Activated T-helper 1 cell treated with anti-CD3 and anti-CD28 coated beads, Interleukin-12 subunit alpha, Interleukin-12 subunit beta, Interleukin-2, Interleukin-4 antibody, amounts not matched to agents 30 ng/mL and 10 ng/mL and 1 ng/mL, durations not matched to agents 14 hours and 24 hours and 36 hours (primary cell): ENCODE measurements at regions of chr11 and their contacts with region 1.

Region 1: DNA sequence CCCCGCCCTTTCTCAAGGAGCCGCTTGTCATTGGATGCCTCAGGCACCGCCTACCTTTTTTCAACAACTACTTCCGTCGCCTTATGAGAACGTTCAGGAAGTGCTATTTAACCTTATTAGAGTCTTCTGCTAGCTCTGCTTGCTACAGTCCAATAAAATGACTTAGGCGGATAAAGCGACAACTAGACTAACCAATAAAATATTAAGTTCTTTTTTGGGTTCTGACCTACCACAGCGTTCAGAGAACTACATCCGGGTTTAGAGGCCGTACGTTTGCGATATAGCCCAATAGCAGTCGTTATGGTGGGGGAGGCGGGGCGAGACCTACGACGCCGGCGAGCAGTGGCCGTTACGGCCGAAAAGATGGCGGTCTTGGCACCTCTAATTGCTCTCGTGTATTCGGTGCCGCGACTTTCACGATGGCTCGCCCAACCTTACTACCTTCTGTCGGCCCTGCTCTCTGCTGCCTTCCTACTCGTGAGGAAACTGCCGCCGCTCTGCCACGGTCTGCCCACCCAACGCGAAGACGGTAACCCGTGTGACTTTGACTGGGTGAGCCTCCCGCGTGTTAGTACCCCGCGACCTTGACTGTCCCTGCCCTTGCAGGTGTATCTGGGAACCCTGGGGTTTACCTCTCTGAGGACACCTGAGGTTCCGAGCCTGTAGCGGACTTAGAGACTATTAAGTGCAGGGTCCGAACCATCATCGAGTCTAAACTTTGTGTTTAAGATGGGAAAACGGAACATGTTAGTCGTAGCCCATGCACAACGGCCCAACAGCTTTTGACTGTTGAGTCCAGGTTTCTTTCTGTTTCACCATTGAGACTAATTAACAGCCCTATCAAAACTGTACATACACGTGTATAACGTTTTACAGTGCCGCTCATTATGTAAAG is at the start of gene TMX2:
- DNase-seq: peak; percentile 88
- H3K4me3 Mint-ChIP-seq: peak within 1 kb of the TSS; percentile 97
- H3K27ac Mint-ChIP-seq: peak within 1 kb of the TSS; percentile 94
- H3K4me1 Mint-ChIP-seq: peaks cover 53% of the 10 kb centered on the region
- H3K27me3 Mint-ChIP-seq: no peaks in the 10 kb centered on the region
- total RNA-seq, gene TMX2: 95.9 and 96.8 TPM in 2 replicates

Region 2: DNA sequence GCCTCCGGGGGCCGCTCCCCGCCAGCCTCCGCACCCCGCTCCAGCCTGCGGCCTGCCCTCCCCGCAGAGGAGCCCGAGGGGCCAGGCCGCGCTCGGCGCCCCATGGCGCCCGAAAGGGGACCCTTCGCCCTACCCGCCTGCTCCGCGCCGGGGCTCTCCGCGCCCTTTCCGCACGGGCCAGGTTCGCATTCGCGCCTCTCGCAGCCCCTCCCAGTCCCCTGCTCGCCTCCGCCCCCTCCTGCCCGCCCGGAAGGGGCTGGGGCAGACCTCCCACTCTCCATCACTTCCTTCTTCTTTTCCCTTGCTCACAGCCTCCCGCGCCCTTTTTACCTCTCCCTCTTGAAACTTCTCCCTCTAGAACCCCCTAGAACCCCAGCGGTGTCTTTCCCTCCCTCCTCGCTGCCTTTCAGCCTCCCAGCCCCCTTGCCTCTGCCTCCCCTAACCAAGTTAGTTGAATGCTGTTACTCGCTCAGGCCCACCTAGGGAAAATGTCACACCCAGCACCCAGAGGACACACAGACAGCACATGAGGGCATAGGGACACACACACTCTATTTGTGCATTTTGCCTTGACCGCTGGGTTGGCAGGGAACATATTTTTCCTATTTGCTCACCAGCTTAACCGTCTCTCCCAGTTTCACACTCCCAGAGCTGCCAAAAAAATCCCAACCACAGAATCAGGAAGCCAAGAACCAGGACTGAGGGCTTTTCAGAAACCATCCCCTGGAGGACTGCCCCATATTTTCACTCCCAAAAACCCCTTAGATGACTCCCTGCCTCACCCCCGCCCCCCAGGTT is 285.4 kb before region 1 on chr11 and contains the start of gene SLC43A3:
- intact Hi-C with region 1: loop called (anchors 1 kb)
- DNase-seq: peak; percentile 60
- H3K4me3 Mint-ChIP-seq: peak within 1 kb of the TSS; percentile 90
- H3K27ac Mint-ChIP-seq: peak within 1 kb of the TSS; percentile 80
- H3K4me1 Mint-ChIP-seq: peaks cover 56% of the 10 kb centered on the region
- H3K27me3 Mint-ChIP-seq: peaks cover 3% of the 10 kb centered on the region
- total RNA-seq, gene SLC43A3: 181 and 184 TPM in 2 replicates

Region 3: GRCh38 chr11:57657194-57658022 is 55.1 kb before region 1 on chr11 and contains the start of gene CLP1:
- intact Hi-C with region 1: loop called (anchors 1 kb)
- DNase-seq: peak; percentile 99
- H3K4me3 Mint-ChIP-seq: peak within 1 kb of the TSS; percentile 96
- H3K27ac Mint-ChIP-seq: peak within 1 kb of the TSS; percentile 95
- H3K4me1 Mint-ChIP-seq: peaks cover 18% of the 10 kb centered on the region
- H3K27me3 Mint-ChIP-seq: no peaks in the 10 kb centered on the region
- total RNA-seq, gene CLP1: 17.8 and 19.1 TPM in 2 replicates

Region 4: GRCh38 chr11:57727185-57727584 is 14.7 kb after region 1 on chr11:
- intact Hi-C with region 1: no loop called
- DNase-seq: no peak
- H3K4me3 Mint-ChIP-seq: no peak overlapping the region
- H3K27ac Mint-ChIP-seq: peak overlapping the region; percentile 16
- H3K4me1 Mint-ChIP-seq: peaks cover 13% of the 10 kb centered on the region
- H3K27me3 Mint-ChIP-seq: no peaks in the 10 kb centered on the region

Region 5: GRCh38 chr11:57792060-57792541 is 79.6 kb after region 1 on chr11:
- intact Hi-C with region 1: loop called (anchors 1 kb)
- DNase-seq: peak; percentile 84
- H3K4me3 Mint-ChIP-seq: peak overlapping the region; percentile 53
- H3K27ac Mint-ChIP-seq: peak overlapping the region; percentile 86
- H3K4me1 Mint-ChIP-seq: peaks cover 50% of the 10 kb centered on the region
- H3K27me3 Mint-ChIP-seq: peaks cover 1% of the 10 kb centered on the region

Region 6: GRCh38 chr11:58524232-58525036 is 811.9 kb after region 1 on chr11:
- intact Hi-C with region 1: loop called (anchors 1 kb)
- DNase-seq: no peak
- H3K4me3 Mint-ChIP-seq: peak overlapping the region; percentile 74
- H3K27ac Mint-ChIP-seq: peak overlapping the region; percentile 77
- H3K4me1 Mint-ChIP-seq: peaks cover 36% of the 10 kb centered on the region
- H3K27me3 Mint-ChIP-seq: no peaks in the 10 kb centered on the region